Calu3 (cell line): ENCODE measurements at regions of chr1 and their contacts with region 1.

Region 1: DNA sequence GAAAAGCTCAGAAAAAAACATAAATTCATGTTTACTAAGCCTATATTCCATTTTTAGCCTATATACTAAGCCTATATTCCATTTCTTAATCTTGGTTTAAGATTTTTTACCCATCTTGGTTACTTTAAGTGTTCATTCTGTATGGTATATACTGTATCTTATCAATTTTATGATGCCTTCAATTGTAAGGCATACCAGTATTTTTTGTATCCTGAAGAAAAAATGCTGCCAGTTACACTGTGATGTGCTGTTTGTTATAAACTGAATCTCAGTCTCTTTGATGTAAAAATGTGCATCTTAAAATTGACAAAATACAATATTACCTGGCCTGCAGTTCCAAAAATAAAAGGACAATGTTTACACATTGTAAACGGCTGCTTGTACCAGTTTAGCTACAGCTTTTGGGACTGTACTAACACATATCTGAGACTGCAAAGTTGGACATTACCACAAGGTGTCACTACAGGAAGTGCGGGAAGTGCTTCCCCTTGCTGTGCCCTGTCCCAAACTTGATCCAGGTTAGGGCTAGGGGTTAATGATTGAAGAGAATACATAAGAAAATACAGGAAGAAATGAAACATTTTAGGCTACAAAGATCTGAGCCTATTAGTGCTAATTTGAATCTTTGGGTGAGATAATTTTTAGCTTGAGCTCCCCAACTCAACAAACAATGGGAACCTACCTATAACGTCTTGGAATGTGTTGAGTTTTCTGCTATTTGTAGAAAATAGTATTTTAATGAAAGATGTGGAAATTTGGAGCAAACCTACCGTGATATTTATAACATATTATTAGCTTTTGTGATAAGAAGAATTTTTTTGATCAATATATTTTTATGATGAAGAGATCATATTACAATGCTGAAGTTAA is 108.9 kb downstream of the LBR start:
- DNase-seq: peak; percentile 71
- H3K4me3 Mint-ChIP-seq: no peak overlapping the region
- H3K27ac Mint-ChIP-seq: peak overlapping the region; percentile 1
- H3K4me1 Mint-ChIP-seq: peaks cover 19% of the 10 kb centered on the region
- H3K27me3 Mint-ChIP-seq: peaks cover 12% of the 10 kb centered on the region
- CTCF ChIP-seq: peak; percentile 78

Region 2: GRCh38 chr1:225182716-225183115 is 136.2 kb before region 1 on chr1:
- CTCF ChIA-PET with region 1: no interaction called
- intact Hi-C with region 1: no loop called
- DNase-seq: no peak
- H3K4me3 Mint-ChIP-seq: no peak overlapping the region
- H3K27ac Mint-ChIP-seq: no peak overlapping the region
- H3K4me1 Mint-ChIP-seq: no peaks in the 10 kb centered on the region
- H3K27me3 Mint-ChIP-seq: no peaks in the 10 kb centered on the region
- CTCF ChIP-seq: no peak

Region 3: DNA sequence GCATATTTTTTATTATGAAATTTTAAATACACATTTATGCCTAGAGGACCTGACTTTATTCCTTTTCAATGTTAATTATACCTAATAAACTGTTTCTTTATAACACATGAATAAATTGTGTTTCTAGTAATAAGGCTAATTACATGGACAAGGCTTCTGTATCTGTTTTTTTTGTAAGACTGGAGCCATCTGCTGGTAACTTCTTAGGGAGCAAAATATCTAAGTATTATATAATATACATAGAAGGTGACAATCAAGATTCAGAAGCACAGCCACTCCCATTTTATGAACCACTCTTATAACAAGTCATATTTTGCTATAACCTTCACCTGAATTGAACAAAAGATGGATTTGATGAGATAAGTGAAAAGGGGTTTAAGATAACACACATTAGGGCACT is 24.7 kb after region 1 on chr1:
- CTCF ChIA-PET with region 1: interaction called, 7 read pairs
- intact Hi-C with region 1: loop called (anchors 1 kb)
- DNase-seq: no peak
- H3K4me3 Mint-ChIP-seq: no peak overlapping the region
- H3K27ac Mint-ChIP-seq: no peak overlapping the region
- H3K4me1 Mint-ChIP-seq: no peaks in the 10 kb centered on the region
- H3K27me3 Mint-ChIP-seq: no peaks in the 10 kb centered on the region
- CTCF ChIP-seq: no peak

Region 4: DNA sequence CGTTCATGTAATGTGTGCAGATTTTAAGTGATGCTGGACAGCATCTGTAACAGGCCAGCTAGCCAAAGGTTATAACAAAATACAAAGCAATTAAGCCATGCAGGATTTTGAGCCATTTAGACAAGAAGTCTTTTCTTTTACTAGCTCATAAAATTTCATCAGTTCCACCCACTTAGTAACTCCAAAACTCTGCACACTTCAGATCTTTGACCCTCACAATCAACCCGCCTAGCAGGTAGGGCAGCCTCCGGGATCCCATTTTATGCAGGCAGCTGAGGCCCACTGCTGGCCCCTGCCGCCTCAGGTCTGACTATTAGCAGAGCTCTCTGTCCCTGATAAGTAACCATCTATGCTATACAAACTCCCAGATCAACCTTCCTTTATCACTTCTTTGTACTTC is 99.7 kb after region 1 on chr1:
- CTCF ChIA-PET with region 1: interaction called, 4 read pairs
- intact Hi-C with region 1: loop called (anchors 1 kb)
- DNase-seq: peak; percentile 66
- H3K4me3 Mint-ChIP-seq: peak overlapping the region; percentile 0
- H3K27ac Mint-ChIP-seq: peak overlapping the region; percentile 5
- H3K4me1 Mint-ChIP-seq: peaks cover 63% of the 10 kb centered on the region
- H3K27me3 Mint-ChIP-seq: no peaks in the 10 kb centered on the region
- CTCF ChIP-seq: no peak

Region 5: DNA sequence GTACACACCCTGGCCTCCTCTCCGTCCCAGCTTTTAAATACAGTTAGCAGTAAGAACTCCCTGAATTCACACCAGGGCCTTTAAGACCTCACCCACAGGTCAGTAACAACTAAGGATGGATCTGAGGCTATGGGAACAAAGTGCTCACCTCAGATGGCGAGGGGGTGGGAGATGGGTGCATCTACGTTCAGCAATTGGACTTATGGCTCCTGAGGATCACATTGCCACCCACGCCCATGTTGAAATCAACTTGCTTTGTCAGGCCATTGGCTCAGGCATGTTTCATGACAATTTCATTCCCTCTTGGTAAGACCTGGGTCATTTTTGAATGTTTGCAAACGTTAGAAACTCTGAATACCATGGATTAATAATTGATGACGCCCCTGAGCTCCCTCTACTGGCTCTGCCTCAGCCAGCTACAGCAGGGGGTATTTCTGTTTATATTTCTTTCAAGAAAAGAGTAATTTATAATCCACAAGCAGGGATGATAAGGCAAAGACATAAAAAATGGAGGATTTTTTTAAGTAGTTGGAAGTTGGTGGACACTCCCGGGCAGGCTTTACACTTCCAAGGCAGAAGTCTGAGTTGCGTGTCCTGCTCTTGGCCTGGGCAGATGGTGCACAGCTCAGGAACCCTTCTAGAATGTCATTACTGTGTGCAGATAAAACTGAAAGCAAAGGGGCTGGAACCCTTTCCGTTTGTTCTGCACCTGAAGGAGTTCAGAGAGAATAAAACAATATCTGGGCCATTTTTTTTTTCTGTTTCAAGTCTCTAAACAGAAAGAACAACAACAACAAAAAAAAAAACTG is 122.6 kb after region 1 on chr1:
- CTCF ChIA-PET with region 1: interaction called, 3 read pairs
- intact Hi-C with region 1: loop called (anchors 2 kb)
- DNase-seq: peak; percentile 75
- H3K4me3 Mint-ChIP-seq: peak overlapping the region; percentile 37
- H3K27ac Mint-ChIP-seq: peak overlapping the region; percentile 92
- H3K4me1 Mint-ChIP-seq: peaks cover 76% of the 10 kb centered on the region
- H3K27me3 Mint-ChIP-seq: no peaks in the 10 kb centered on the region
- CTCF ChIP-seq: peak; percentile 73

Region 6: DNA sequence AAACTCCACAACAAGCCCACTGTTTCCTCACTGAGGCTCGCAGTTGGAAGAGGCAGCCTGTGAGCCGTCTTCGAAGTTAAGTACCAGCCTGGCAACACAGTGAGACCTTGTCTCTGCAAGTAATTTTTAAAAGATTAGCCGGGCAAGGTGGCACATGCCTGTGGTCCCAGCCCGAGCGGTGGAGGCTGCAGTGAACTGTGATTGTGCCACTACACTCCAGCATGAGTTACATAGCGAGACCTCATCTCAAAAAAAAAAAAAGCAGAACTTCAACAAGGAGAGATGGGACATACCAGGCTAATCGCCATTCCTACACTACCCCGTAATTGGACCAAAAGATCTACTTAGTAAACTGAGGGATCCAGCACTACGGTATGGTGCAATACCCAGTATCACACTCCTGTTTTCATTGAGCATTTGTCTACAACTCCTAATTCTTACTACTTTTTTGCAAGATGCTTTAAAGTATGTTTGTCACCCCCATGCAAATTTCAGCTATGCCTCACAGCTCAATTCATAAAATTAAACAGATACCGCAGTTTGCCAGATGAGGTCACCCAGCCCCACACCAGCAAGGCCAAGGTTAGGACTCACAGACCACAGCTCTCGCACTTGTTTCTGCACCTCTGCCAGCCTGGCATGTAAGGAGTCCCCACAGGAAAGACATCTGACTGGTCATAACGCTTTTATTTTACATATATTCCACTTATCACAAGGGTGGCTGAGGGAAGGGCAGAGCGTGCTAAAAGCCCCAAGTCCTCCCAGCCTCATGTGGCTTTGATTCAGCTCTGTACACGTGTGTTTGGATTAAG is 659.2 kb after region 1 on chr1:
- CTCF ChIA-PET with region 1: no interaction called
- intact Hi-C with region 1: loop called (anchors 2 kb)
- DNase-seq: no peak
- H3K4me3 Mint-ChIP-seq: no peak overlapping the region
- H3K27ac Mint-ChIP-seq: no peak overlapping the region
- H3K4me1 Mint-ChIP-seq: no peaks in the 10 kb centered on the region
- H3K27me3 Mint-ChIP-seq: no peaks in the 10 kb centered on the region
- CTCF ChIP-seq: no peak